Transverse colon (tissue), 4 donors: ENCODE measurements at regions of chr7 and their contacts with region 1.

Region 1: DNA sequence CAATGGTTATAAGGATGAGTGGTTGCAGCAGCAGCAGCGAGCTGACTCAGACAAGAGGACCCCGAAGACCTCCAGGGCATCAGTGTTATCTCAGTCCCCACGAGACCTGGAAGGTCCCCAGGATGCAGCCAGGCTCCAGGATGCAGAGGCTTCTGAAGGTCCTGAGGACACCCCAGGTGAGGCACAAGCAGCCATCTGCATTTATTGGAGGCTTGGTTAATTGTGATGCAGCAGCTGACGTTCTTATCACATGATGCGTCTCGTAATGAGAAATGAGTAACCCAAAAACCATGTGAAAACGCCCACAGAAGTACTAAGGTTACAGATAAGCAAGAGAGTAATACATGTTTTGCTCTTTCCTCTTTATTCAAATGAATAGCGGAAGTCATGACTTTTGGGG is 17.4 kb downstream of the C7orf57 start:
- DNase-seq: no peak
- H3K4me3 ChIP-seq: no peak overlapping the region
- H3K27ac ChIP-seq: no peak overlapping the region
- H3K4me1 ChIP-seq: no peaks in the 10 kb centered on the region
- H3K27me3 ChIP-seq: no peaks in the 10 kb centered on the region
- CTCF ChIP-seq: no peak
- EP300 ChIP-seq: no peak
- POLR2A ChIP-seq: no peak

Region 2: DNA sequence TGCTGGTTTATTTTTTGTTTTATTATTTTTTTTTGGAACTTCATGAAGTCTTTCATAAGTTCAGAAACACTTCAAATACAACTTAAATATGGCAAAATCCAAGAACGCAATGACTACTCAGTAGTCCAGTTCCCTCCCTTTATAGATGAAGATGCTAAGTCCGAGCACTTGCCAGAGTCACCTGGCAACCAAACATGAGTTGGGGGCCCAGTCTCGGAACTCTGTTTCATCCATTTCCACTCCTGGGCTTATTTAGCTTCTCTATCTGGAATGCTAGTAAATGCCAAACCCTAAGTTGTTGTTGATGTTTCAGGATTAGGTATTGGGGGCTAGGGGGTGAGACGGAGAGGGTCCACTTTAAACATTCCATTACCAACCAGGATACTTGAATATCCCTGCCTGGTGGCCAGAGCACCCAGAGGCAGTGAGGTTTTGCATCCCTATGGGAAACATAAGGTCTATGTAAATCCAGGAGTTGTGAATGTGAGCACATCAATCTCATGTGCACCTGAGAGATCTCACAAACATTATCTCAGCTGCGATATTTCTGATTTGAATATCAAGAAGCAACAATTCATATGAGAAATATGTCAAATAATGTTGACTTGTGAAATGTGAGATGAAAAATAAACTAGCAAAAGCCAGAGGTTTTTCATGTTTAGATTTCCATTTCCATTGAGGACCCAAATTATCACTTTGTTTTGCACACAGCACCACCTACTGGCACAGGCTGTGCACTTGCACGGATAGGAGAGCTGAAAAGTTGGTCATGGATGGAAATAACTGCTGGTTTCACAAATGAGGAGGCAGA is 233.7 kb before region 1 on chr7:
- in situ Hi-C with region 1: no loop called
- intact Hi-C with region 1: no loop called
- DNase-seq: peak; percentile 71
- H3K4me3 ChIP-seq: no peak overlapping the region
- H3K27ac ChIP-seq: no peak overlapping the region
- H3K4me1 ChIP-seq: peaks cover 0 to 8% (median under 1%) of the 10 kb centered on the region in 4 donors
- H3K27me3 ChIP-seq: no peaks in the 10 kb centered on the region
- CTCF ChIP-seq: peak; percentile 89 to 93 (median 92)
- EP300 ChIP-seq: no peak
- POLR2A ChIP-seq: no peak

Region 3: GRCh38 chr7:48006866-48007265 is 45.9 kb before region 1 on chr7:
- in situ Hi-C with region 1: no loop called
- intact Hi-C with region 1: loop called (anchors 1 kb)
- DNase-seq: no peak
- H3K4me3 ChIP-seq: no peak overlapping the region
- H3K27ac ChIP-seq: no peak overlapping the region
- H3K4me1 ChIP-seq: no peaks in the 10 kb centered on the region
- H3K27me3 ChIP-seq: no peaks in the 10 kb centered on the region
- CTCF ChIP-seq: no peak
- EP300 ChIP-seq: no peak
- POLR2A ChIP-seq: no peak

Region 4: DNA sequence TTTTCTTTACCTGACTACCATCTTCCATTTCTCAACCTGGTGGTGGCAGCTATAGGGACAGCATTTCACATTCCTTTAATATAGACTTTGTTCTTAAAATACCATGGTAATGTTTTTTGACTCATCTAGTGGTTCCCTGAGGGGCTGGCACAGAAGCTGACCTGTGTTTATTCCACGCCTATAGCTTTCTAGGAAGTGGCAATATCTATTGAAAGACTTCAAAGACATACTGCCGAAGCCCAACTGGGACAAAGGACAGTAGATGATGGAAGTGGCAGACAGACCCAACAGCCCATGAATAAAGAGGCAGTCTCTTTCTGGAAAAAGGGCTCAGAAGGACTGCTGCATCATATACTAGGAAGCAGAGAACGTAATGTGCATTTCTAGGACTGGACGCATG is 35.1 kb before region 1 on chr7:
- in situ Hi-C with region 1: no loop called
- intact Hi-C with region 1: no loop called
- DNase-seq: no peak
- H3K4me3 ChIP-seq: no peak overlapping the region
- H3K27ac ChIP-seq: no peak overlapping the region
- H3K4me1 ChIP-seq: no peaks in the 10 kb centered on the region
- H3K27me3 ChIP-seq: no peaks in the 10 kb centered on the region
- CTCF ChIP-seq: no peak
- EP300 ChIP-seq: no peak
- POLR2A ChIP-seq: no peak